ENCODE measurements at regions of chr1 and their contacts with region 1.

Region 1: GRCh38 chr1:204363335-204364124 is 3.8 kb upstream of the PLEKHA6 start:
- DNase-seq: peak; percentile 83
- ATAC-seq: peak; percentile 87
- H3K4me3 Mint-ChIP-seq: peak overlapping the region; percentile 48
- H3K27ac Mint-ChIP-seq: peak overlapping the region; percentile 51
- H3K4me1 Mint-ChIP-seq: peaks cover 12% of the 10 kb centered on the region
- H3K27me3 Mint-ChIP-seq: peaks cover 8% of the 10 kb centered on the region

Region 2: DNA sequence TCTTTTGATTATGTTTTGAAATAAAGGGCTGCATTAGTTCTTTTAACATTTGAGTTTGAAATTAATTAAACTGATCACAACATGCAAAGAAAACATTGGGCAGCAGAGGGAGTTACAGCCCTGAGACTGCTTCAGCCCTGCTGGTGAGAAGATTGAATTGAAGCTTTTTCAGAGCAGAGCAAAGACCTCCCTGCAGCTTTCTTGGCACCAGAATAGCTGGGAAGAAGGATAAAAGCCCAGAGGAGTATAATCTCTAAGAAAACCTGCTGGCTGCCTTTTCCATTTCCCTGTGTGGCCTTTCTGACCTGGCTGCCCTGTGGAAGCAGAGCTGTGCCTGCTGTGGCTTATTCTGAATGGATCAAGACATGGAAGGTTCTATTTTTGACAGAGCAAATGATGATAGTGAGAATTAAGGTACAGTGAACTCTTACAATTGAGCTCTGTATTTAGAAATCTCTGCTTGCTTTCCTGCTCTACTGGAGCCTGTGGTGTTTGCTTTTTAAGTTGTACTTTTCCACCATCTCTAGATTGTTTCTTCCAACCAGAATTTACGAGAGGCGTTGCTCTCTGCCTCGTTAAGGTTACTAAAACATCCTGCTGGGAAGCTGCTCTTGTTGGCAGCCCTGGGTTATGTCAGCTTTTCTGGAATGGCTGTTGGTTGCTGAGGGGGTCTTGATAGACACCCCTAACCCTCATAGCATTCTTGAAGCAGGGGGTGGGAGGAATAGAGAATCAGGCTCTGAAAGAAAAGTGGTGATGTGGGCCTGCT is 492.2 kb before region 1 on chr1:
- CTCF ChIA-PET with region 1: interaction called, 16 read pairs
- POLR2A ChIA-PET with region 1: no interaction called
- DNase-seq: peak; percentile 50
- ATAC-seq: peak; percentile 78
- H3K4me3 Mint-ChIP-seq: no peak overlapping the region
- H3K27ac Mint-ChIP-seq: no peak overlapping the region
- H3K4me1 Mint-ChIP-seq: no peaks in the 10 kb centered on the region
- H3K27me3 Mint-ChIP-seq: no peaks in the 10 kb centered on the region

Region 3: GRCh38 chr1:204207136-204207616 is 156.4 kb before region 1 on chr1:
- CTCF ChIA-PET with region 1: interaction called, 23 read pairs
- POLR2A ChIA-PET with region 1: no interaction called
- DNase-seq: peak; percentile 79
- ATAC-seq: peak; percentile 99
- H3K4me3 Mint-ChIP-seq: no peak overlapping the region
- H3K27ac Mint-ChIP-seq: no peak overlapping the region
- H3K4me1 Mint-ChIP-seq: no peaks in the 10 kb centered on the region
- H3K27me3 Mint-ChIP-seq: peaks cover 47% of the 10 kb centered on the region

Region 4: GRCh38 chr1:204257954-204258752 is 105.4 kb before region 1 on chr1:
- CTCF ChIA-PET with region 1: interaction called, 63 read pairs
- POLR2A ChIA-PET with region 1: no interaction called
- DNase-seq: peak; percentile 39
- ATAC-seq: no peak
- H3K4me3 Mint-ChIP-seq: no peak overlapping the region
- H3K27ac Mint-ChIP-seq: no peak overlapping the region
- H3K4me1 Mint-ChIP-seq: no peaks in the 10 kb centered on the region
- H3K27me3 Mint-ChIP-seq: no peaks in the 10 kb centered on the region

Region 5: DNA sequence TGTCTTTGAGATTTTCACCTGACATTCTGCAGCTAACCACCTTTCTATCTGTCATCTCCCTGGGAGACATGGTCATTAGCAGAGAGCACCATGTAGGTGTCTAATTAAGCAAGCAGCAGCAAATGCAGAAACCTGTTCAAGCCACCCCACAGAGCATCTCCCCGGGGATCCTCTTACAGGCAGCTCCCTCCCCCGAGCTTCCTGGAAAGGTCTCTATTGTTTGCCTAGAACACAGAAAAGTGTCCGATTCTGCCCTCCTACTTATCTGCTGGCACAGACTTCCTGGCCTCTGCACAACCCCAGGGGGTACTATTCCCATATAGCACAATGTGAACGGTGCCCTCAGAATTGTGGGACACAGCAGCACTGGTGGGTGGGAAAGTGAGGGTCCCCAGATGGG is 49.9 kb before region 1 on chr1:
- CTCF ChIA-PET with region 1: no interaction called
- POLR2A ChIA-PET with region 1: no interaction called
- DNase-seq: no peak
- ATAC-seq: no peak
- H3K4me3 Mint-ChIP-seq: no peak overlapping the region
- H3K27ac Mint-ChIP-seq: no peak overlapping the region
- H3K4me1 Mint-ChIP-seq: no peaks in the 10 kb centered on the region
- H3K27me3 Mint-ChIP-seq: peaks cover 6% of the 10 kb centered on the region

Region 6: DNA sequence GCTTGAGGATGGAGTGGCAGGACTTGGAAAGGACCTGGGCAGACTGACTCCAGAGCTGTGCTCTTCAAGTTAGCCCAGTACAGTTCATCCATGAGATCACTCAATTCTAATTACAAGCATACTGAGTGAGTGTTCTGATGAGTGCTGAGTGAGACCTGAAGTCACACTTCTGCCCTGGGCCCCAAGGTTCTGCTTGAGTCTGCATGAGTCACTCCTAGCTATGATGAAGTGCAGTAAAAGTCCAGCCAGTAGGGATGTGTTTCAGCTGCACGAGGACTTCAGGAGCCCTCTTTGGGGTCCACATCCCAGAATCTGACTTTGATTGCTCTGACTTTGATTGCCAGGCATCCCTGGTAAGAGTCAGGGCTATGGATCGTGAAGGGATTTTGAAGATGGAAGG is 39.6 kb before region 1 on chr1:
- CTCF ChIA-PET with region 1: interaction called, 29 read pairs
- POLR2A ChIA-PET with region 1: no interaction called
- DNase-seq: no peak
- ATAC-seq: no peak
- H3K4me3 Mint-ChIP-seq: no peak overlapping the region
- H3K27ac Mint-ChIP-seq: no peak overlapping the region
- H3K4me1 Mint-ChIP-seq: no peaks in the 10 kb centered on the region
- H3K27me3 Mint-ChIP-seq: no peaks in the 10 kb centered on the region

Region 7: GRCh38 chr1:204353213-204353910 is 10.2 kb before region 1 on chr1:
- CTCF ChIA-PET with region 1: interaction called, 18 read pairs
- POLR2A ChIA-PET with region 1: no interaction called
- DNase-seq: no peak
- ATAC-seq: no peak
- H3K4me3 Mint-ChIP-seq: no peak overlapping the region
- H3K27ac Mint-ChIP-seq: no peak overlapping the region
- H3K4me1 Mint-ChIP-seq: peaks cover 5% of the 10 kb centered on the region
- H3K27me3 Mint-ChIP-seq: no peaks in the 10 kb centered on the region

Region 8: DNA sequence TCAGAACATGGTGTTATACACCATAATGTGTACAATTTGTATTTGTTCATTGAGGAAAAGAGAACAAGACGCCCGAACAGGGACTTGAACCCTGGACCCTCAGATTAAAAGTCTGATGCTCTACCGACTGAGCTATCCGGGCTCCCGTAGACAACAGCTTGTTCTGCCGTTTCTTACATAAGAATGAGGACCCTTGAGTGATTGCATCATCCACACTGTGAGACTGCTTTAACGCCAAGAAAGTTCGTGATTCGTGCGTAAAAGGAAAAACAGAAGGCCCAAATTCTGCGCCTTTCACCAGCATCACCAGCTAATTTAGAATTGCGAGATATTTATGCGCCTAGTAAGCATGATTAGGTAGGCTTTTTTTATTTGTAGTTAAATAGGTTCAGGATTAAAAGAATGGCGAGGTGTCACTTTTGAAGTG is 143.4 kb after region 1 on chr1:
- CTCF ChIA-PET with region 1: interaction called, 11 read pairs
- POLR2A ChIA-PET with region 1: no interaction called
- DNase-seq: peak; percentile 94
- ATAC-seq: peak; percentile 82
- H3K4me3 Mint-ChIP-seq: peak overlapping the region; percentile 88
- H3K27ac Mint-ChIP-seq: peak overlapping the region; percentile 97
- H3K4me1 Mint-ChIP-seq: peaks cover 42% of the 10 kb centered on the region
- H3K27me3 Mint-ChIP-seq: no peaks in the 10 kb centered on the region